Breast epithelium (tissue), 4 donors: ENCODE measurements at regions of chr16 and their contacts with region 1.

Region 1: DNA sequence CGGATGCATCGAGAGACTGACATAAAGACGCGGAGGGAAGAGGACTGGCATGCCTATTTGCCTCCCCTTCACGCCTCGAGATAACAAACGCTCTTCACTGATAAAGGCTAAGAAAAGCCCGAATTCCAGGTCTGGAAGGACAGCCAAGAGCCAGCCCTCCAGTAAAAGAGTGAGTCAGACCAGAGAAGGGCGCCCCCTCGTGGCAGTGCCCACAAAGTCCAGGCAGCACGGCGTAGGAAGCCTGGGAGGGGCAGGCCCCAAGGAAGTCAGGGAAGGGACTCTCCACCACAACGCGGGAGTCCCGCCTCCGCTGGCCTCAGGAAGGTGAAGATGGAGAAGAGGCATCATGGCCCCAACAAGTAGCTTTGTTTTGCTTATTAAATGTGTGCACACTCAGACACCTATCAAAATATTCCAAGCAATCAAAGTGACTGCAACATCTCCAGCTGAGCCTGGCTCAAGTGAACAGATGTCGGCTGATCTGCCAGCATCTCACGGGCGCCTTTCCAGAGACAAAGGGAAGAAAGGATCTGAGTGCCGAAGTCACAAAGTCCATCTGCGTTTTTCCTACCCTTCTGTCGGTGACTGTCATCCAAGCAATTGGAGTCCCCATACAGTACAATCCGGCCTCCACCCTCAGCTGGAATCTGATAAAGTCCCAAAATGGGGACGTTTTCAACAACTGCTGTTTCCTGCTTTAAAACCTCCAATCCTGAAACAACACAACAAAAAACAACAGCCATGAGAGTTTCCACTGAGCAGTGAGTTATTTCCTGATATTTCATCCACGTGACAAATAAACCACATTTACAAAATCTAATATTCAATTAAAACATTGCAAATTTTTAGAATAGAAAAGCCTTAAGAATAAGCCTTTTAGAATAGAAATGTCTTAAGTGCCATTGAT is 20.4 kb upstream of the SLC38A8 start:
- DNase-seq: peak in 1 of 2 donors; percentile 32
- H3K4me3 ChIP-seq: no peak overlapping the region
- H3K27ac ChIP-seq: no peak overlapping the region
- H3K4me1 ChIP-seq: no peaks in the 10 kb centered on the region
- H3K27me3 ChIP-seq: no peaks in the 10 kb centered on the region
- CTCF ChIP-seq: peak; percentile 65 to 69 (median 68)
- POLR2A ChIP-seq: no peak

Region 2: GRCh38 chr16:82181456-82182185 is 1881.4 kb before region 1 on chr16:
- intact Hi-C with region 1: no loop called
- DNase-seq: no peak
- H3K4me3 ChIP-seq: no peak overlapping the region
- H3K27ac ChIP-seq: no peak overlapping the region
- H3K4me1 ChIP-seq: no peaks in the 10 kb centered on the region
- H3K27me3 ChIP-seq: no peaks in the 10 kb centered on the region
- CTCF ChIP-seq: no peak
- POLR2A ChIP-seq: no peak

Region 3: GRCh38 chr16:83187405-83187804 is 875.6 kb before region 1 on chr16:
- intact Hi-C with region 1: loop called (anchors 10 kb)
- DNase-seq: no peak
- H3K4me3 ChIP-seq: no peak overlapping the region
- H3K27ac ChIP-seq: no peak overlapping the region
- H3K4me1 ChIP-seq: no peaks in the 10 kb centered on the region
- H3K27me3 ChIP-seq: peaks cover 0 to 2% of the 10 kb centered on the region in 2 donors
- CTCF ChIP-seq: no peak
- POLR2A ChIP-seq: no peak

Region 4: GRCh38 chr16:85206472-85207356 is 1143.7 kb after region 1 on chr16:
- intact Hi-C with region 1: no loop called
- DNase-seq: peak in 1 of 2 donors; percentile 48
- H3K4me3 ChIP-seq: peak overlapping the region in 1 of 3 donors; percentile 34
- H3K27ac ChIP-seq: peak overlapping the region; percentile 62
- H3K4me1 ChIP-seq: peaks cover 13 to 20% of the 10 kb centered on the region in 2 donors
- H3K27me3 ChIP-seq: no peaks in the 10 kb centered on the region
- CTCF ChIP-seq: no peak
- POLR2A ChIP-seq: no peak